ENCODE measurements at regions of chr22 and their contacts with region 1.

Region 1: DNA sequence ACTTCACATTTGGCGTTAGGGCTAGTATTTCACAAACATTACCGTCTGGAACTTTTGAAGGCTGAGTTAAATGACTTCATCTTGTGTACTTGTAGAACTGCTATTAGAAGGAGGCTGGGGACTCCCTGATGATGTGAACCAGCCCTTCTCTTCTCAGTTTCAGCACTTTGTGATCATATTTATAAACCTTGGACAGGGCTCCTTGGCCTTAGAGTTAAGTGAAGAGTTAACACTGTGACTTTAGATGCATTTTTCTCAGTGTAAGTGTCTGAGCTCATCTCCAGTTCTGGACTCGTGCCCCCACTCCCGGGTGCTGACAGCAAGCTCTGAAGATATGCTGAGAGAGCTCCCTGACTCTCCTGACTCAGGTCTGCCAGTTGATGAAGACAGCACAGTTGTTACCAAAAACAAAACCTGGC is 8.4 kb downstream of the MIAT start:
- DNase-seq: peak; percentile 52
- H3K4me3 ChIP-seq: no peak overlapping the region
- CTCF ChIP-seq: no peak

Region 2: DNA sequence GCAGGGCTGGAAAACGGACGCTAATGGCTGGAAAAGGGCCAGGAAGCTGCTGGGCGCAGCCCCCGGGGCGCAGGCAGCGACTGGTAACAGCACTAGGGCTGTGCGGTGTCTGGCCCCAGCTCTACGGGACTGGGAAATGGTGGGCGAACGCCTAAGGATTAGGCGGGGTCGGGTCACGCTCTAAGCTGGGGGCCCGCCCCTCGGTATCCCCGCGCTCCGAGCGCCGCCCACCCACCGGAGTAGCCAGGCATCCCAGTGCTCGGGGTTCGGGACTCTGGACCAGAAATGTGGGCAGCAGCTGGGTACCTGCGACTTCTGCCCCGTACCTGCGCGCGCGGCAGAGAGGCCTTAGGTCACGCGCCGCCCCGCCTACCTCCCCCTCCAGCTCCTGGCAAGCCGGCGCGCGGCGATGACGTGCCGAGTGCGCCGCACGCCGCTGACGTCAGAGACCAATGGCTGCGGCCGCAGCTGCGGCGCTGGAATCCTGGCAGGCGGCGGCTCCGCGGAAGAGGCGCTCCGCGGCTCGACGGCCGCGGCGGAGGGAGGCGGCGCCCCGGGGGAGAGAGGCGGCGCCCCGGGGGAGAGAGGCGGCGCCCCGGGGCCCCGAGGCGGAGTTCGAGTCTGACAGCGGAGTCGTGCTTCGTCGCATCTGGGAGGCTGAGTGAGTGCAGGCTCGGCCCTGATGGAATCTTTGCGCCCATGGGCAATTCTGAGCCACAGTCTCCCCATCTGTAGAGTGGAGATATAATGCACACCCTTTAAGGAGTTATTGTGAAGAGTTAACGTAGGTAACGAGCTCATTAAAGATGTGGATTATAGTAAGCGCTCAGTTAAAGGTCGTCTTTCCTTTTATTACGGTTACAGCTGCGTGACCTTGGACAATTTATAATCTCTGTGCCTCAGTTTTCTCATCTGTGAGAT is 182.1 kb before region 1 on chr22 and contains the starts of genes HPS4 and SRRD:
- CTCF ChIA-PET with region 1: interaction called, 21 read pairs
- POLR2A ChIA-PET with region 1: interaction called, 3 read pairs
- DNase-seq: peak; percentile 46
- H3K4me3 ChIP-seq: peak within 1 kb of the TSS; percentile 92
- CTCF ChIP-seq: no peak

Region 3: DNA sequence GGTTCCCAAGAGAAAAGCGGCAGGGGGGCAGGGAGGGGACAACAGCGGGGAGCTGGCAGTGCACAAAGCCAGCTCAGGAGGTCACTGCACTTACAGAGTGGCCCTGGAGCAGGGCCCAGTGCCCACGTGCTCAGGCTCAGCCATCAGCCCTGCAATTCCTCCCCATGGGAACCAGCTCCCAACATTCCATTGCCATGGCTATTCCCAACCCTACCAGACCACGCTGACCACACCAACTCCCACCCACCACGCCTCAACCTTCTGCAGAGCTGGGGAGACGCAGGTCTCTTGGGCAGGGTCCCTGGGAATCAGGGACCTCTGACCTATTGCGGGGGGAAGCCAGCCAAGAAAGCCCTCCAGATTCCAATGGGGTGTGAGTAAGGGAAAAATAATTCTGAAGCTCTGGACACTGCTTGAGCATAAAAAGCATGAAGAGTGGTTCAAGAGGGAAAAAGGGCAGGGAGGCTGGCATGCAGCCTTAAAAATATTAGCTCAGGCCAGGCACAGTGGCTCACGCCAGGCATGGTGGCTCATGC is 115.3 kb before region 1 on chr22:
- CTCF ChIA-PET with region 1: interaction called, 13 read pairs
- POLR2A ChIA-PET with region 1: no interaction called
- DNase-seq: peak; percentile 51
- H3K4me3 ChIP-seq: no peak overlapping the region
- CTCF ChIP-seq: no peak

Region 4: DNA sequence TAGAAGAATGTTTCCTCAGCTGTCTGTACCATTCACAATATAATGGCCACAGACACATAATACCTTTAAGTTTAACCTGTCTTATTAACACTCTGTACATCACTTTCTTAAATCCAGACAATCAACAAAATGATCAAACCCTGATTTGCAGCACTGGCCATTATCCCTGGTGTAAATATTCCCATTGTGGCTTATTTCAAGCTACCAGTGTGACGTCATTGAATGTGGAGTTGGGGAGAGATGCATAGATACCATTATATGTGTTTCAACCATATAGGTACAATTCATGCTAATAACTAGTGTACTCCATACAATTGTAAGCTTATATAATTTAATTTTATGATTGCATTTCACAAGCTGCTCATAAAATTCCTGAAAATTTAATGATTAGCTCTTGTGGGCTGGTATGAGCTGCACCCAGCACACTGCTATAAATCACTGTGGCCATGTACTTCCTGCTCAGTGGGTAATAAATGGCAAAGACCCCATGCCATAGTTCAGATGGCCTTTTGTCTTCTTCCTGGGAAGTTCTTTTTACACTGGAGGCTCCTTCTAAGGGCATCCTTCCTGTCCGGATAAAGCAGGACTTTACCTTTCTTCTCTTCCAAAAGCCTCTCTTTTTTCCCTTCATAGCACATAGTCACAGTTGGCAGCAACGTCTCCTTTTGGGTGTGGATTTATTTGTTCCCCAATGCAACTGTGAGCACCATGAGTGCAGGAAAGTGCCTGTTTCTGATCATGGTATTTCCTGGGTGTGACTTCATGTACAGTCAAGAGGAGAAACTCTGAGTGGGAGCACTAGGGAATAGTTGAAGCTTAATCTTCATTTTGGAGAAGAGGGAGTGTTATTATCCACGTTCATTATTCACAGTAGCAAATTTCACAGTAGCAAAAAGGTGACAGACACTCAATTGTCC is 79.3 kb after region 1 on chr22:
- CTCF ChIA-PET with region 1: no interaction called
- POLR2A ChIA-PET with region 1: no interaction called
- DNase-seq: no peak
- H3K4me3 ChIP-seq: no peak overlapping the region
- CTCF ChIP-seq: no peak